B cell (primary cell): ENCODE measurements at regions of chr4 and their contacts with region 1.

Region 1: DNA sequence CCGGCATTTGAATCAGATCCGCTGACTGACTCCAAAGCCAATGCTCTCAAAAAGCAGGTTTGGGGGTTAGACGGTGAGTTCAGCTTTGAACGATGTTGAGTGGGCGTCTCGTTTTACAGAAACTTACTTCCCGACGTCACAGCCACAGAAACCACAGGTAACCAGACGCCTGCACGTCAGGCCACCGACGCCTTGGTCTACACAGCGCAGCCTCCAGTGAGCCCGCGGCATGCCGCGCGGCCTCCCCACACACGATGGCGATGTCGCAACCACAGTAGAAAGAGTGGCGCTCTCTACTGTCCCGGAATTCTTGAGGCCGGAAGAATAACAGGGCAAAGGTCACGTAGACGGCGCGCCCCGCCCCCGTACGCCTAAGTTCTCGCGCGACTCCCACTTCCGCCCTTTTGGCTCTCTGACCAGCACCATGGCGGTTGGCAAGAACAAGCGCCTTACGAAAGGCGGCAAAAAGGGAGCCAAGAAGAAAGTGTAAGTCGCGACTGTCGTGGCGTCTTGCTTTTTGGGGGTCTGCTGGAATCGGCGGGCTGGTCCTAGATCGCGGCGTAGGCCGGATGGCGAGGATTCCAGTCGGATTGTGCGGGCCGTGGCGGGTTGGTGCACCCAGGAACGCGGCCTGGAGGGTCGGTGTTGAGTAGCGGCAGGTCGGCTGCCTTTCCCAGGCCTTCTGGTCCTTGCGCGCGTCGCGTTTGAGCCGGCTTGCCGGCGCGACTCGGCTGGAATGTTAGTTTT is at the start of gene RPS3A:
- DNase-seq: peak; percentile 100
- ATAC-seq: peak; percentile 97
- H3K4me3 ChIP-seq: peak within 1 kb of the TSS; percentile 82 to 99 (median 90)
- H3K4me3 Mint-ChIP-seq: peak within 1 kb of the TSS; percentile 95
- H3K27ac ChIP-seq: peak within 1 kb of the TSS; percentile 88 to 91
- H3K27ac Mint-ChIP-seq: peak within 1 kb of the TSS; percentile 98
- H3K4me1 ChIP-seq: peaks cover 26 to 31% of the 10 kb centered on the region in 2 donors
- H3K4me1 Mint-ChIP-seq: peaks cover 39% of the 10 kb centered on the region
- H3K27me3 ChIP-seq: no peaks in the 10 kb centered on the region
- H3K27me3 Mint-ChIP-seq: peaks cover 6% of the 10 kb centered on the region
- CTCF ChIP-seq: peak; percentile 85
- total RNA-seq, gene RPS3A: 2,423 and 2,463 TPM in 2 replicates

Region 2: DNA sequence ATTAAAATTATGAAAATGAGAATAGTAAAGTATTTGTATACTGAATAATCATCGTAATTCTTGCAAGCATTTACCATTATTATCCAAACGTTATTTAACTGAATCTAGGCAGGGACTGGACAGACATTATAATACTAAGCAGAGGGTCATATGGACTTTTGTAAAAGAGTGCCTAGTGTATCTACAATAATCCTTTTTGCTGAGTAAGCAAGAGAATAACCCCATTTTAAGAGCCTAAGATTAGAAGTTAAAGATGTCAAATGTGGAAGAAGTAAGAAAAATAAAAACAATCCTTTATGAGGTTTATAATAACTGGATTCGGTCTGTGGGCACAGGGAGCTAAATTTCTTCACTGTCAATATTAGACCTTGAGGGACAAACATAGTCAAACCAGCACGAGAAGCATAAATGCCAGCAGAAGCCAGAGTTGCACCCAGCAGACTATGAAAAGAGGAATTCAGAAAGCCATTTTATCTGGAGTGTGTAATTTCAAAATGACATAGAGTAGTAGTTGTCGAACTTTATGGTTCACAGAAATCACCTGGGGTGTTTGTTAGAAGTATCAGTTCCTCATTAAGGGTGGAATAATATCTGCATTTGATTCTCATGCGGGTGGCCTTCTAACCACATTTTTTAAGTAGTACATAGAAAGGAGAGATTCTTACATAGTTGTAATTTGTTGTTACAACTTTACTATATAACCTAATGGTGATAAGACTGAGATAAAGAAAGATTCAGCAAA is 1060.9 kb before region 1 on chr4:
- CTCF ChIA-PET with region 1: no interaction called
- POLR2A ChIA-PET with region 1: no interaction called
- intact Hi-C with region 1: loop called (anchors 10 kb)
- DNase-seq: peak; percentile 77
- ATAC-seq: peak; percentile 80
- H3K4me3 ChIP-seq: no peak overlapping the region
- H3K4me3 Mint-ChIP-seq: peak overlapping the region; percentile 40
- H3K27ac ChIP-seq: peak overlapping the region in 1 of 2 donors; percentile 47
- H3K27ac Mint-ChIP-seq: peak overlapping the region; percentile 43
- H3K4me1 ChIP-seq: peaks cover 28 to 29% of the 10 kb centered on the region in 2 donors
- H3K4me1 Mint-ChIP-seq: peaks cover 36% of the 10 kb centered on the region
- H3K27me3 ChIP-seq: peaks cover 0 to 6% (median 0%) of the 10 kb centered on the region in 4 experiments
- H3K27me3 Mint-ChIP-seq: peaks cover 3% of the 10 kb centered on the region
- CTCF ChIP-seq: no peak

Region 3: DNA sequence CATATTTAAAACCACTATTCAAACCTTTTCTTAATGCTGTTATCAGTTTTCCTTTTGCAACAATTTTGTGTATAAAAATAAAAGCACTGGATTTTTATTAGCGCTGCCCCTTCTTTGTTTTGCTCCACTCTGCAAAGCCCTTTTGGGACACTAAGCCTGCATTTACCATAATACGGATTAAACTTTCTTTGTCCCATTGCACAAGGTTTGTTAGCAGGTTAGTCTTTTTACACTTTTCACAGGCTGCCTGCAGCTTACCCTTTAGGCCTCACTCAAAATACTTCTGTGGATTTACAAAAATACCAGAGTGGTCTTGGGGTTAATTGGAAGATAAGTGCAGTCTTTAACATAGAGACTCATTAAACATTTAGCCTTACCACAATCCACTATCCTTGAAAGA is 553.1 kb before region 1 on chr4:
- CTCF ChIA-PET with region 1: no interaction called
- POLR2A ChIA-PET with region 1: no interaction called
- intact Hi-C with region 1: no loop called
- DNase-seq: no peak
- ATAC-seq: no peak
- H3K4me3 ChIP-seq: no peak overlapping the region
- H3K4me3 Mint-ChIP-seq: no peak overlapping the region
- H3K27ac ChIP-seq: no peak overlapping the region
- H3K27ac Mint-ChIP-seq: no peak overlapping the region
- H3K4me1 ChIP-seq: no peaks in the 10 kb centered on the region
- H3K4me1 Mint-ChIP-seq: no peaks in the 10 kb centered on the region
- H3K27me3 ChIP-seq: no peaks in the 10 kb centered on the region
- H3K27me3 Mint-ChIP-seq: no peaks in the 10 kb centered on the region
- CTCF ChIP-seq: no peak

Region 4: DNA sequence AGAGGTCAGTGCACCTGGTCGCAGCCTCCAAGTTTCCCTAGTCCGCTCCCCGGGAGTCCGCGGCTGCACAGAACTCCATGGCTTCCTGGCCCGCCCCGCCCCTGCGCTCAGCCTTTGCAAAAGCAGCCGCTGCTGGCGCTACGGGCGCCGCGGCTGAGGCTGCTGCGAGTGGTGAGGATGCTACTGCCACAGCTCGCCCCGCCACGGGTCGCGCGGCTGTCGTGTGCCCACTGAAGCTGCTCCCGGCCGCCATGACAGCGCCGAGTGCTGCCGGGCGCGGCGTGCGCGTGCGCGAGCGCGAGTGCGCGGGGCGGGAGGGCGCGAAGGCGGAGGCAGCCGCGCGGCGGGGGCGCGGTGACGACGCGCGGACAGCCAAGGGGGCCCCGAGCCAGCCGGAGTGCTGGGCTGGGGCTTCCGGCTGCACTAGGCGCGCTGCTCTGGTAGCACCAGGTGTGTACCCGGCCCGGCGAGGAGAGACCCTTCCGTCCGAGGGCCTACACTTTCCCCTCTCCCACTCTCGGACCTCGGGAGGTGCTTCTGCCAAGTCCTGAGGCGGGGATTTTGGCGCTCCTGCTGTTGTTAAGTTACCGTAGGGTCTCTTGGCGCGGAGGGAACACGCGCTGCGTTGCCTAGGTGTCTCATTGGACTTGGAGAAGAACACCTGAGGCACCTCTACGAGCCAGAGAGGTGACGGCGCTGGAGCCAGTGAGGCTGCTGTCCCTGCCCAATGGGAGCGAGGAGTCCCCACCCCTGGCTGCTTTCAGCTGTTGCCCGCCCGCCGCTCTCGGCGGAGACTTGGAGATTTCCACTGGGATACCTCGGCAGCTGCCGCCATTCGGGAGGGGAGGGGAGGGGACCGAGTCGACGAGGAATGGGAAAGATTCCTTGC is 83.7 kb before region 1 on chr4:
- CTCF ChIA-PET with region 1: interaction called, 3 read pairs
- POLR2A ChIA-PET with region 1: interaction called, 19 read pairs
- intact Hi-C with region 1: loop called (anchors 1 kb)
- DNase-seq: peak; percentile 92
- ATAC-seq: peak; percentile 77
- H3K4me3 ChIP-seq: peak overlapping the region; percentile 77 to 97 (median 91)
- H3K4me3 Mint-ChIP-seq: peak overlapping the region; percentile 100
- H3K27ac ChIP-seq: peak overlapping the region; percentile 89 to 95
- H3K27ac Mint-ChIP-seq: peak overlapping the region; percentile 99
- H3K4me1 ChIP-seq: peaks cover 29 to 32% of the 10 kb centered on the region in 2 donors
- H3K4me1 Mint-ChIP-seq: peaks cover 33% of the 10 kb centered on the region
- H3K27me3 ChIP-seq: no peaks in the 10 kb centered on the region
- H3K27me3 Mint-ChIP-seq: no peaks in the 10 kb centered on the region
- CTCF ChIP-seq: no peak

Region 5: DNA sequence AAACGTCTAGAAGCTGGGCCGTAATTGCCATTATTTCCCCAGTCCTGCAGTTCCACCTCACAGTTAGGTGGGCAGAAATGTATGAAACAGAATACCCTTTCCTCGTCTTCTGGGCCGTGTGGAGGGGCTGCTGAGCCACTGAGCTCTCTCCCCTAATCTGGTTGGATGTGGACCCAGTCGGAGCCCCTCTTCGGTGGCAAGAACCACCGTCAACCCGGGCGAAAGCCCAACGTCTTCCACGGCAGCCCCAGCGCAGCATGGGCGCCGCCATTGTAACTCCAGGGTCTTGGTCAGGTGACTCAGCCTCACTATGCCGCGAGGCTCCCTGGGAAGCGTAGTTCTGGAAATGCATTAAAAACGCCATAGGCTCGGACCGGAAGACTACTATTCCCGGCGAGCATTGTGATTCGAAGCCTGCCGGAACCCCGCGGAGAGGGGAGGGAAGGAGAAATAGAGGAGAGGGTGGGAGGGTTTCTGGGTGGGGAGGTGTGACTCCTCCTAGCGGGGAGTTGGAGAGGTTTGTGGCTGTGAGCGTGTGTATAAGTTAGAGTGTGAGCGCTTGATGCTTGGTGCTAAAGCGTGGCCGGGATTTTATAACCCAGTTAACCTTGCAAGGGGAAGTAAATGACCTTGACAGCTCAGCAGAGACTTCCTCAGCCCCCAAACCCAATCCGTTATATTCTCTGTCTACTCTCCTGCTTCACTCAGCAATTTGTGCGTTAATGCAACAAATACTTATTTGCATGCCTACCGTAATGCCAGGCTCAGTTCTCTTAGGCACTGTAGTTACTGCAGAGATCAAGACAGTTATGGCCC is 661.5 kb after region 1 on chr4 and contains the start of gene GATB:
- CTCF ChIA-PET with region 1: interaction called, 5 read pairs
- POLR2A ChIA-PET with region 1: no interaction called
- intact Hi-C with region 1: loop called (anchors 1 kb)
- DNase-seq: peak; percentile 95
- ATAC-seq: peak; percentile 96
- H3K4me3 ChIP-seq: peak within 1 kb of the TSS; percentile 77 to 97 (median 83)
- H3K4me3 Mint-ChIP-seq: peak within 1 kb of the TSS; percentile 98
- H3K27ac ChIP-seq: peak within 1 kb of the TSS; percentile 60 to 77
- H3K27ac Mint-ChIP-seq: peak within 1 kb of the TSS; percentile 96
- H3K4me1 ChIP-seq: peaks cover 11 to 13% of the 10 kb centered on the region in 2 donors
- H3K4me1 Mint-ChIP-seq: peaks cover 17% of the 10 kb centered on the region
- H3K27me3 ChIP-seq: peaks cover 0 to 3% (median 0%) of the 10 kb centered on the region in 4 experiments
- H3K27me3 Mint-ChIP-seq: peaks cover 12% of the 10 kb centered on the region
- CTCF ChIP-seq: peak; percentile 74
- total RNA-seq, gene GATB: 19.2 and 22.7 TPM in 2 replicates

Region 6: DNA sequence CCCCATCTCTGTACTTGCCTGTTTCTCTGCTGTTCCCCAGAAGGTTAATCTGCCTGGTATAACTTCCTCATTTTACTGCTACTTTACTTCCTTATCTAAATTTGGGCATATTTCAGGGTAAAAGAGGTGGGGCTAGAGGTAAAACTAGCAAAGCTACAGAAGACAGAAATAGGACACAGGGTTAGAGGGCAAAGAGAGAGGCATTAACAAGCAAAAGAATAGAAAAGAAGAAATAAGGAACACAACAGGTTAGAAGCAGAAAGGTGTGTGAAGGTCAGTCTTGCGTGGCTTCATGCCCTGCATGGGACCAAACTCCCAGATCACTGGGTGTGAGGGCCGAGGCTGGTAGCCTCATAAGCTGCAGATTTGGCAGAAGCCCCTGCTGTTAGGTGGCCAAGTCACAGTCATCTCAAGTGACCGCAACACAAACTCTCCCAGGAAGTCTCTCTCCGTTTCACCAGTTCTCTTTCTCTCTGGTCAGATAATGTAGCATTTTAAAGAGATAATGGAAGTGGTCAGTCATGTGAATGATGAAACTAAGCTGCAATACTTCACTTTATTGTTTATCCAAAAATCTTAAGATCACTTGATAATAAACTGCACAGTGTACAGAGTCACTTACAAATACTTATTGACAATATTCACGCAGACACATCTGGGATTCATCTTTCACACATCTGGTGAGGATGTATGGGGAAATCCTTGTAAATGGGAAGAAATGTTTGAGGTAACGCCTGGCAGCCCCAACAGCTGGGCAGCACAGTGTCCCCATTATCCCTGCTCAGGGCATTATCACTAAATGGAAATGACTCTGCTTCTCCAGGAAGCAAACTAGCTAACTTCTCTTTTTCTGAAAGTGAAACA is 1564.0 kb after region 1 on chr4:
- CTCF ChIA-PET with region 1: no interaction called
- POLR2A ChIA-PET with region 1: no interaction called
- intact Hi-C with region 1: loop called (anchors 5 kb)
- DNase-seq: peak; percentile 82
- ATAC-seq: peak; percentile 67
- H3K4me3 ChIP-seq: peak overlapping the region; percentile 30 to 55 (median 52)
- H3K4me3 Mint-ChIP-seq: peak overlapping the region; percentile 77
- H3K27ac ChIP-seq: peak overlapping the region; percentile 84
- H3K27ac Mint-ChIP-seq: peak overlapping the region; percentile 89
- H3K4me1 ChIP-seq: peaks cover 94% of the 10 kb centered on the region in 2 donors
- H3K4me1 Mint-ChIP-seq: peaks cover 91% of the 10 kb centered on the region
- H3K27me3 ChIP-seq: no peaks in the 10 kb centered on the region
- H3K27me3 Mint-ChIP-seq: no peaks in the 10 kb centered on the region
- CTCF ChIP-seq: no peak

Region 7: GRCh38 chr4:152779513-152780266 is 1680.3 kb after region 1 on chr4 and contains the starts of genes ARFIP1 and TIGD4:
- CTCF ChIA-PET with region 1: no interaction called
- POLR2A ChIA-PET with region 1: no interaction called
- intact Hi-C with region 1: loop called (anchors 1 kb)
- DNase-seq: peak; percentile 95
- ATAC-seq: peak; percentile 89
- H3K4me3 ChIP-seq: peak within 1 kb of the TSS; percentile 59 to 95 (median 90)
- H3K4me3 Mint-ChIP-seq: peak within 1 kb of the TSS; percentile 98
- H3K27ac ChIP-seq: peak within 1 kb of the TSS; percentile 60 to 79
- H3K27ac Mint-ChIP-seq: peak within 1 kb of the TSS; percentile 93
- H3K4me1 ChIP-seq: peaks cover 20 to 25% of the 10 kb centered on the region in 2 donors
- H3K4me1 Mint-ChIP-seq: peaks cover 51% of the 10 kb centered on the region
- H3K27me3 ChIP-seq: no peaks in the 10 kb centered on the region
- H3K27me3 Mint-ChIP-seq: peaks cover 5% of the 10 kb centered on the region
- CTCF ChIP-seq: peak; percentile 9
- total RNA-seq, gene ARFIP1: 23.5 and 27.0 TPM in 2 replicates
- total RNA-seq, gene TIGD4: 0.36 and 0.59 TPM in 2 replicates